WTC11 (cell line): ENCODE measurements at regions of chr1 and their contacts with region 1.

Region 1: GRCh38 chr1:48530727-48531351 is 58.8 kb upstream of the SPATA6 start:
- DNase-seq: peak; percentile 98
- ATAC-seq: peak; percentile 92
- H3K4me3 Mint-ChIP-seq: no peak overlapping the region
- H3K27ac Mint-ChIP-seq: no peak overlapping the region
- H3K4me1 Mint-ChIP-seq: peaks cover 38% of the 10 kb centered on the region
- H3K27me3 Mint-ChIP-seq: no peaks in the 10 kb centered on the region
- CTCF ChIP-seq: peak; percentile 88

Region 2: DNA sequence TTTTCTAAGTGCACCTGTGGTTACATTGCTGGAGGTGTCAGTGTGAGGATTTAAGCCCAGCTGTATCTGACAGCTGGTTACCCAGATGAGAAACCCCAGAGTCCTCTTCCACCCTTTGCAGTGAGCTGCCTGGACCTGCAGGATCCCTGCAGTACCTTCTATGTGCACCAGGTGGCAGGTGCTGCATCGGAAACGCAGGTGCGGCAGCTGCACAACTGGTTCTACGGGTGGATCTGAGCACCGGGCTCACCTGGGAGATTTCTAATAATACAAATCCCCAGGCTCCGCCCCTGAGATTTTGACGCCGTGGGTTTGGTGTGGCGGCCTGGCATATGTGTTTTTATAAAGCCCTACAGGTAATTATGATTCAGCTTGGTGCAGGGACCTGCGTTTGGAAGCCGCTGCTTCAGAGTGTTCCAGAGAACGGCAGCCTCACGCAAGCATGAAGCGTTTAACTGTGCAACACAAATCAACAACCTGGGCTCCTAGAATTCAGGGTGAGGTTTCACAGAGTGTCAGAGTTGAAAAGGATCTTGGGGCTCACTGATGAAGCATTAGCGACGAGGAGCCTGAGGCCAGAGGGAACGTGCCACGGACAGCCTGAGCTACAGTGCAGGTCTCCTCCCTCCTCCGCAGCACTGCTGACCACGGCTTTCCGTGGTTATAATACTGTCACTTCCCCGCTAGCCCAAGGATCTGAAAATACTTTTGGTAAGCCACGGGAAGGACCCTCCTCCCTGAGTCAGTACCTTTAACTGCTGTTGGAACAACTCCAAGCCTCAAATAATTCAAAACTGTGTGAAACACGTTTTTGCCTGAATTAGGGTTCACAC is 436.9 kb before region 1 on chr1:
- CTCF ChIA-PET with region 1: interaction called, 12 read pairs
- POLR2A ChIA-PET with region 1: no interaction called
- DNase-seq: peak; percentile 91
- ATAC-seq: peak; percentile 97
- H3K4me3 Mint-ChIP-seq: peak overlapping the region; percentile 40
- H3K27ac Mint-ChIP-seq: no peak overlapping the region
- H3K4me1 Mint-ChIP-seq: peaks cover 4% of the 10 kb centered on the region
- H3K27me3 Mint-ChIP-seq: peaks cover 54% of the 10 kb centered on the region
- CTCF ChIP-seq: peak; percentile 82

Region 3: DNA sequence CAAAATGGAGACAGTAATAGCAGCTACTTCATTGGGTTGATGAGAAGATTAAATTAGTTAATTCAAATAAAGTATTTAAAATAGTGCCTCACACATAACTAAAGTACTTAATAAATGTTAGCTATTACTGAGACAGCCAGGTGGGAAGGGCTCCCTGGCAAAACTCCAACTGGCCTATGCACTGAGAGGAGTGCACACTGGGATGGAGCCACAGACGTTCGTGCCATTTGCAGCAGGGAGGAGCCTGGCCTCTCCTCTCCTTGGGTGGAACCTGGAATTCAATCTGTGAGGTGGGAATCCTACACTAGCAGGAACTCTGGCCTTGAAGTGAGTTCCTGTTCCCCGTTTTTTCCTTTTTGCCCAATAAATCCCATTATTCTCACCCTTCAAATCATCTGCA is 280.3 kb before region 1 on chr1:
- CTCF ChIA-PET with region 1: interaction called, 10 read pairs
- POLR2A ChIA-PET with region 1: no interaction called
- DNase-seq: no peak
- ATAC-seq: no peak
- H3K4me3 Mint-ChIP-seq: no peak overlapping the region
- H3K27ac Mint-ChIP-seq: no peak overlapping the region
- H3K4me1 Mint-ChIP-seq: peaks cover 8% of the 10 kb centered on the region
- H3K27me3 Mint-ChIP-seq: no peaks in the 10 kb centered on the region; the same call in 1 of the 2 replicates
- CTCF ChIP-seq: no peak

Region 4: GRCh38 chr1:48471691-48472576 is 58.9 kb before region 1 on chr1 and contains the start of gene SPATA6:
- CTCF ChIA-PET with region 1: interaction called, 11 read pairs
- POLR2A ChIA-PET with region 1: interaction called, 5 read pairs
- DNase-seq: peak; percentile 98
- ATAC-seq: peak; percentile 91
- H3K4me3 Mint-ChIP-seq: peak within 1 kb of the TSS; percentile 96
- H3K27ac Mint-ChIP-seq: peak within 1 kb of the TSS; percentile 98
- H3K4me1 Mint-ChIP-seq: peaks cover 27% of the 10 kb centered on the region
- H3K27me3 Mint-ChIP-seq: peaks cover 14% of the 10 kb centered on the region
- CTCF ChIP-seq: no peak
- total RNA-seq, gene SPATA6: 16.0 to 17.7 TPM (median 17.1 TPM) in 3 replicates

Region 5: DNA sequence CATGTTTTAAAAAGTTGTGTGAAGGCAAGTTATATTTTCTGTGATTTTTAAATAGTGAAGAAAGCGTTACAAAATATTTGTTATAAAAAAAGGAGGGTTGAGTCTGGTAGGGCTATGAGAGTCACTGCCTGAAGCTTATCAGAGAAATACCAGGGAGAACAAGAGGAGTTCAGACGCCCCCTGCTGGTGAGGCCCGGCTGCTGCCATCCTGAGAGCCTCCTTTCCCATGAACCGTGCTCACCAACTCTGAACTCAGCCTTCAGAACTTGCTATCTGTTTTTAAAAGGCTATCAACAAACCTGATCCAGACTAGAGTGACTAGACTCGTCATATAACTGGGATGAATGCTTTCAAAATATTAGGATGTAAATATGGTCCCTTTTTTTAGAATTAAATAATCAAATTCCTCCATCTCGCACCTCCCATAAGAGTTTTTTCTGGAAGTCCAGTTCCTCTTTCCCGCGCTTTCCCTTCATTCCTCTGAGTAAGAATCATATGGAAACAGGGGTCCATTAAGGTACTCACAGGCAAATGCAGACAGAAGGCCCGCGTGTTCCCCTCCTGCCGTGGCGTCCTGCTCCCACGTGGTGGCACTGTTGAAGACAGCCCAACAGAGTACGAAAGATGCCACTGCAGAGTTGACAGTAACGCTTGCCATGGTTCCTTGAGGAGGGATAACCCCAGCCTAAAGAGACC is 32.6 kb before region 1 on chr1:
- CTCF ChIA-PET with region 1: interaction called, 74 read pairs
- POLR2A ChIA-PET with region 1: no interaction called
- DNase-seq: peak; percentile 86
- ATAC-seq: peak; percentile 75
- H3K4me3 Mint-ChIP-seq: no peak overlapping the region
- H3K27ac Mint-ChIP-seq: no peak overlapping the region
- H3K4me1 Mint-ChIP-seq: peaks cover 54% of the 10 kb centered on the region
- H3K27me3 Mint-ChIP-seq: no peaks in the 10 kb centered on the region; the same call in 1 of the 2 replicates
- CTCF ChIP-seq: peak; percentile 92